ENCODE measurements at regions of chr1 and their contacts with region 1.

Region 1: GRCh38 chr1:64242895-64243756 is 39.7 kb downstream of the UBE2U start:
- DNase-seq: peak; percentile 33

Region 2: DNA sequence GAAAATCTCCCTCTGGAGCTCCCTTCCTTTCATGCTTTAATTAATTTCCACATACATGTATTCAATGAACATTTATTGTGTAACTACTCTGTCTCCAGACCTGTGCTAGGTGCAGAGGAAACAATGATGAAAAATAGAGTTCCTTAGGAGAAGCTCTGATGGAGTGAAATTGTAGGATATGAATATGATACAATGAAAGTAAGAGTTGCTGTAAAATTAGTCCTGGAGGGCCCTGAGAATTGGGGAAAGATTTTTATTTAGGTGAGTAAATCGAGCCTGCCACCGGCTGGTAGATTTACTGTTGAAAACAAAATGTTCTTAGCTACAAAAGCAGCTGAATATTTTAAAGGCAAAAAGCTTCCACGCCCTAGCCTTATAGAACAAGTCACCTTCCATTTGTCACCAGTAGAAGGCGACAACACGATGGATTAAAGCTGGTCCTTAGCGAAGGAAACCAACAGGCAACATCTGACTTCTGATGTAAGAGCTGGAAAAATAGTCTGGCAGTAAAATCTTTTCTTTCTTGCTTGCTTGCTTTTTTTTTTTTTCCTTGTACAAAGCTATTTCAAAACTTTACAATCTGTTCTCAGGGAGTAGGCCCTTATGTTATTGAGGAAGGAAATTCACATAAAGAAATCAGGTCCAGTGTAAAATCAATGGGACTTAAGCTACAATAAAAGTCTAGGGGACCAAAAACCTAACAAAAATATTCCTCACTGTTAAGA is 551.3 kb before region 1 on chr1:
- in situ Hi-C with region 1: loop called (anchors 25 kb)
- DNase-seq: peak; percentile 71

Measured in Caki2 (cell line).